CD4-positive, alpha-beta T cell (primary cell): ENCODE measurements at regions of chr19 and their contacts with region 1.

Region 1: GRCh38 chr19:38964738-38965137 is 10.8 kb downstream of the FBXO17 start:
- DNase-seq: no peak
- ATAC-seq: no peak
- H3K4me3 ChIP-seq: no peak overlapping the region
- H3K4me3 Mint-ChIP-seq: no peak overlapping the region
- H3K27ac ChIP-seq: no peak overlapping the region
- H3K27ac Mint-ChIP-seq: no peak overlapping the region
- H3K4me1 ChIP-seq: peaks cover 7% of the 10 kb centered on the region
- H3K4me1 Mint-ChIP-seq: peaks cover 4% of the 10 kb centered on the region
- H3K27me3 ChIP-seq: no peaks in the 10 kb centered on the region
- H3K27me3 Mint-ChIP-seq: peaks cover 14% of the 10 kb centered on the region
- CTCF ChIP-seq: no peak

Region 2: GRCh38 chr19:39187559-39187957 is 222.8 kb after region 1 on chr19:
- CTCF ChIA-PET with region 1: no interaction called
- POLR2A ChIA-PET with region 1: no interaction called
- intact Hi-C with region 1: loop called in 1 of 2 experiments (anchors 10 kb)
- DNase-seq: no peak
- ATAC-seq: no peak
- H3K4me3 ChIP-seq: no peak overlapping the region
- H3K4me3 Mint-ChIP-seq: no peak overlapping the region
- H3K27ac ChIP-seq: no peak overlapping the region
- H3K27ac Mint-ChIP-seq: no peak overlapping the region
- H3K4me1 ChIP-seq: no peaks in the 10 kb centered on the region
- H3K4me1 Mint-ChIP-seq: no peaks in the 10 kb centered on the region
- H3K27me3 ChIP-seq: peaks cover 0 to 2% of the 10 kb centered on the region in 2 experiments
- H3K27me3 Mint-ChIP-seq: peaks cover 18% of the 10 kb centered on the region
- CTCF ChIP-seq: peak; percentile 28